ENCODE measurements at regions of chr7 and their contacts with region 1.

Region 1: GRCh38 chr7:157386979-157387800 is 50.4 kb downstream of the DNAJB6 start:
- DNase-seq: peak; percentile 75
- H3K4me3 ChIP-seq: no peak overlapping the region
- H3K27ac ChIP-seq: peak overlapping the region; percentile 47
- H3K4me1 ChIP-seq: peaks cover 10% of the 10 kb centered on the region; the same call in 1 of the 2 replicates
- H3K27me3 ChIP-seq: no peaks in the 10 kb centered on the region

Region 2: GRCh38 chr7:157116762-157117161 is 270.4 kb before region 1 on chr7:
- in situ Hi-C with region 1: no loop called
- DNase-seq: peak; percentile 11
- H3K4me3 ChIP-seq: no peak overlapping the region
- H3K27ac ChIP-seq: no peak overlapping the region
- H3K4me1 ChIP-seq: no peaks in the 10 kb centered on the region
- H3K27me3 ChIP-seq: peaks cover 15% of the 10 kb centered on the region; the same call in 1 of the 2 replicates

Region 3: GRCh38 chr7:157320608-157320980 is 66.6 kb before region 1 on chr7:
- in situ Hi-C with region 1: loop called (anchors 10 kb)
- DNase-seq: peak; percentile 31
- H3K4me3 ChIP-seq: no peak overlapping the region
- H3K27ac ChIP-seq: no peak overlapping the region
- H3K4me1 ChIP-seq: peaks cover 17% of the 10 kb centered on the region
- H3K27me3 ChIP-seq: no peaks in the 10 kb centered on the region

Region 4: DNA sequence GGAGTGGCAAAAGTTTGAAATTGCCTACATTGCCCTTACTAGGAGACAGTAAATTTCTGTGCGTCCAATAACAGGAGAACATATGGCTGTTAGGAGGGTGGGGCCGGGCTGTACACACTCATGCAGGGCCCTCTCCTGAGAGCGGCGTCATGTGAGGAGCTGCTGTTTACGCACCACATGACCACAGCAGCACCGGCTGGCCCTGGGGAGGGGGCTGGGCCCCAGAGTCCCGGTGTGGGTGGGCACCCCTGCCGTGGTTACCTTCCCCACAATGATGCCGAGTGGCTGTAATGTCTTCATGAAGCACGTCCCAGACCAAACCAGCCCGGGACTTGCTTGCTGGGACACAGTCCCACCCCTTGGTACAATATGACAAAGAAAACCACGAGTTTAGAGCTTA is 258.3 kb after region 1 on chr7:
- in situ Hi-C with region 1: no loop called
- DNase-seq: no peak
- H3K4me3 ChIP-seq: no peak overlapping the region
- H3K27ac ChIP-seq: no peak overlapping the region
- H3K4me1 ChIP-seq: no peaks in the 10 kb centered on the region
- H3K27me3 ChIP-seq: no peaks in the 10 kb centered on the region